ENCODE measurements at regions of chr9 and their contacts with region 1.

Region 1: DNA sequence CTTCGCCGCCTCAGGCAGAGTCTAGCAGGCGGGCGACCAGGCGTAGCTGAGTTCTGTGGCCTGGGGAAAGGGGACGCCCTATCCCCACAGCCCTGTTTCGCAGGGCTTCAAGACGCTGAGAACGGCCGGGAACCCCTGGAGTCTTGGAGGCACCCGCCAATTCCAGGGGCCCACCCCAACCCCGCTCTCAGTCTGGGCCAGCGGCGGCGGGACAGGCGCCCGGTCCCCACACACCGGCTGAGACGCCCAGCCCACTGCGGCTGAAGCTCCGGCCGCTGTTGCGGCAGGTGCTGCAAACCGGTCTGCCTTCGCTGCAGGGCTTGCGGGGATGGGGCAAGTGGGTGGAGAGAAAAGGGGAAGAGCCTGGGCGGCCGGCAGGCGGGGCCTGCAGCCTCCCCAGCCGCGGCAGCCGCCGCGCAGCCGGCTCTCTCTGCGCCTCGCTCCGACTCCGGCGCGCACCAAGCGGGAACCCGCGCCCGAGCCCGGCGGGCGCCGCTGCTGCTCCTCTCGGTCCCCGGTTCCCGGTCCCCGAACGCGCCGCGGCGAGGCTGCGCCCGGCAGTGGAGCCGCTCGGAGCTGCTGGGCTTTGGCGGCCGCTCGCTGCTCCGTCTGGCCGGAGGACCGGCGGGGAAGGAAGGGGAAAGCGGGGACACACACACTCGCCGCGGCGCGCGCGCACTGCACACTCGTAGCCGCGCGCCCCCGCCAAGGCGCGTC is at the start of gene PIP5K1B:
- DNase-seq: peak; percentile 89
- H3K4me3 Mint-ChIP-seq: peak within 1 kb of the TSS; percentile 94
- H3K27ac Mint-ChIP-seq: peak within 1 kb of the TSS; percentile 93
- H3K4me1 Mint-ChIP-seq: peaks cover 31% of the 10 kb centered on the region
- H3K27me3 Mint-ChIP-seq: peaks cover 57% of the 10 kb centered on the region
- total RNA-seq, gene PIP5K1B: 56.6 and 58.8 TPM in 2 replicates

Region 2: DNA sequence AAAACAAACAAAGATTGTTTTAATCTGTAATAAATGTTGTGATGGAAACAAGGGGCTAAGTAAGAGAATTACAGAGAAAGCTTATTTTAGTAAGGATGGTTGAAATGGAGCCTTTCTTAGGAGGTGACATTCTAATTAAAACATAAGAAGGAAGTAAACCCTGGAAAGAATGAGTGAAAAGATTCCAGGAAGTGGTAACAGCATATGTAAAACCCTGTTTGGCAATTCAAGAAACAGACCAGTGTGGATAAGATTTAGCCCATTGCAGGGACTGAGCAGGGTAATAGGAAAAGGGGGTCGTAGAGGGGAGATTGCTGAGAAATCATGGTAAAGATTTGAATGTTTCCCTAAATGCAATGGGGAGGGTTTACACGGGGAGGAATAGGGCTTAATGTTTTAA is 21.5 kb before region 1 on chr9:
- intact Hi-C with region 1: loop called (anchors 2 kb)
- DNase-seq: no peak
- H3K4me3 Mint-ChIP-seq: peak overlapping the region; percentile 30
- H3K27ac Mint-ChIP-seq: no peak overlapping the region
- H3K4me1 Mint-ChIP-seq: peaks cover 22% of the 10 kb centered on the region
- H3K27me3 Mint-ChIP-seq: peaks cover 1% of the 10 kb centered on the region

Region 3: GRCh38 chr9:68779558-68780384 is 74.8 kb after region 1 on chr9:
- intact Hi-C with region 1: loop called (anchors 1 kb)
- DNase-seq: peak; percentile 98
- H3K4me3 Mint-ChIP-seq: no peak overlapping the region
- H3K27ac Mint-ChIP-seq: no peak overlapping the region
- H3K4me1 Mint-ChIP-seq: peaks cover 10% of the 10 kb centered on the region
- H3K27me3 Mint-ChIP-seq: peaks cover 4% of the 10 kb centered on the region

Region 4: DNA sequence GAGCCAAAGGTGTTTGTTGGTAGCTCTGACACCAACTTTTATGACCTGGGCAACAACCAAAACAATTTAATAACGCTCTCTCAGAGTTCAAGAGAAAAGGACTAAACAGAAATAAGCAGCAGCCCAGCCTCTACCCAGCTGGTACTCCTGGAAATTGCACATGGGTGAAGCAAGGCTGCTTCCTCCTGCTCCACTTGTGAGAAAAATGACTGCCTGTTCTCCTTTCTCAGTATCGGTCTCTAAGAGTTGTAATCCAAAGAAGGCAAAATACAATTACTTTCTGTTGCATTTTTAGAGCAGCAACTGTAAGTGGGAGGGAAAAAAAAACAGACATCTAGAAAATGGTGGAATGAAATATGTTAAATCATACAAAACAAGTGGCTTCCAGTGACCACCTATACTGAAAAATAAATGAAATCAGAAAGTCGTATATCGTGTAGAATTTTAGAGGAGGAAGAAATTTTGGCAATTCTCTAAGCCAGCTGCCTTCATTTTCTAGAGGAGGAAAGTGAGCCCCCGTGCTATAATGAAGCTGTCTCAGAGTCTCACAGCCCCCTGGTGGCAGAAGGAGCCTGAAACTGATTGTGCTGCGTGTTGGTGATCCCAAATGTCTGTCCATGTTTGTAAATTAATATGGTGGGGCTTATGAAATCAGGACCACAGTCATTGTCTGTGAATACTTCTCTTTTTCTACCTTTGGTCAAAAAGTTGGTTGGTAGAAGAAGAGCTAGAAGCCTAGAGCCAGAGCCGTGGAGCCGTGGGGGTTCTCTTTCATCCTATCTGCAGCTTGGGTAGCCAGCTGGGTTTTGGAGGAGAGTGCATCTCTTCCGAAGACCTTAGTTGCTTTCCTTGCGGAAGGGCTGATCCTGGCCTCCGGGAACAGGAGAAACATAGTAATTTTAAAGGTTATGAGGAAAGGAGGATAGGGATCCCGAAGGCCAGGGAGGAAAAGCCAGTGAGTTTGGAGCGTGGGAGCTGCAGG is 139.9 kb after region 1 on chr9:
- intact Hi-C with region 1: loop called (anchors 5 kb)
- DNase-seq: peak; percentile 62
- H3K4me3 Mint-ChIP-seq: no peak overlapping the region
- H3K27ac Mint-ChIP-seq: peak overlapping the region; percentile 42
- H3K4me1 Mint-ChIP-seq: peaks cover 11% of the 10 kb centered on the region
- H3K27me3 Mint-ChIP-seq: no peaks in the 10 kb centered on the region

Region 5: GRCh38 chr9:68999393-69000105 is 294.6 kb after region 1 on chr9:
- intact Hi-C with region 1: loop called (anchors 2 kb)
- DNase-seq: peak; percentile 93
- H3K4me3 Mint-ChIP-seq: no peak overlapping the region
- H3K27ac Mint-ChIP-seq: peak overlapping the region; percentile 26
- H3K4me1 Mint-ChIP-seq: peaks cover 34% of the 10 kb centered on the region
- H3K27me3 Mint-ChIP-seq: peaks cover 2% of the 10 kb centered on the region

Measured in activated CD4-positive, alpha-beta T cell treated with anti-CD3 and anti-CD28 coated beads, Interleukin-2, amount 10 ng/mL, durations not matched to agents 24 days and 14 days (primary cell).